HEK293T (cell line): ENCODE measurements at regions of chr7 and their contacts with region 1.

Region 1: DNA sequence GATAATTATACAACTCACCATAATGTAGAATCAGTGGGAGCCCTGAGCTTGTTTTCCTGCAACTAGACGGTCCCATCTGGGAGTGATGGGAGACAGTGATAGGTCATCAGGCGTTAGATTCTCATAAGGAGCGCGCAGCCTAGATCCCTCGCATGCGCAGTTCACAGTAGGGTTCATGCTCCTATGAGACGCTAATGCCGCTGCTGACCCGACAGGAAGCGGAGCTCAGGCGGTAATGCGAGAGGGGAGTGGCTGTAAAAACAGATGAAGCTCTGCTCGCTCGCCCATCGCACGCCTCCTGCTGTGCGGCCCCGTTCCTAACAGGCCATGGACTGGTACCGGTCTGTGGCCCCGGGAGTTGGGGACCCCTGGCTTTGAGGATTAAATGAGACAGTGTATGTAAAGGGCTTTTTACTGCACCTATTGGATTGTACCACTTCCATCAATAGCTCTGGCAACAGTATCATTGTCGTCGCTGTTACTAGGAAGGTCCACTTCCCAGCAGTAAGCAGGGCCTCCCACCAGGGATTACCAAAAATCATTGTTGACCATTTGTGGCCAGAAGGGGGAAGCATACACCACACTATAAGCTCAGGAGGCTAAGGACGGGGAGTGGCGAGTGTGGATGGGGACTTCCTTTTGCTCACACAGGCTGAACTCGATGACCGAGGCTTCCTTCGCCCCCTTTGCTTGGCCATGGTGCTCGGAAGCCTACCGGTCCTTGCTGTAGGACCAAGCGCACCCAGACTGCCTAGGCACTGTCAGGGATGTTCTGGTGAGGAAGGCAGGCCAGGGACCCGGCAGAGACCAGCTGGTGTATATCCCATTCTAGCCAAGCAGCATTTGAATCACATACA is 26.4 kb downstream of the AKR1B1 start:
- DNase-seq: peak; percentile 95

Region 2: GRCh38 chr7:134403677-134404076 is 28.8 kb before region 1 on chr7:
- CTCF ChIA-PET with region 1: no interaction called
- POLR2A ChIA-PET with region 1: no interaction called
- DNase-seq: no peak

Region 3: GRCh38 chr7:134505856-134506255 is 73.3 kb after region 1 on chr7:
- CTCF ChIA-PET with region 1: interaction called, 13 read pairs
- POLR2A ChIA-PET with region 1: no interaction called
- DNase-seq: no peak

Region 4: GRCh38 chr7:134547397-134548054 is 115.0 kb after region 1 on chr7:
- CTCF ChIA-PET with region 1: interaction called, 26 read pairs
- POLR2A ChIA-PET with region 1: interaction called, 12 read pairs
- DNase-seq: peak; percentile 88

Region 5: DNA sequence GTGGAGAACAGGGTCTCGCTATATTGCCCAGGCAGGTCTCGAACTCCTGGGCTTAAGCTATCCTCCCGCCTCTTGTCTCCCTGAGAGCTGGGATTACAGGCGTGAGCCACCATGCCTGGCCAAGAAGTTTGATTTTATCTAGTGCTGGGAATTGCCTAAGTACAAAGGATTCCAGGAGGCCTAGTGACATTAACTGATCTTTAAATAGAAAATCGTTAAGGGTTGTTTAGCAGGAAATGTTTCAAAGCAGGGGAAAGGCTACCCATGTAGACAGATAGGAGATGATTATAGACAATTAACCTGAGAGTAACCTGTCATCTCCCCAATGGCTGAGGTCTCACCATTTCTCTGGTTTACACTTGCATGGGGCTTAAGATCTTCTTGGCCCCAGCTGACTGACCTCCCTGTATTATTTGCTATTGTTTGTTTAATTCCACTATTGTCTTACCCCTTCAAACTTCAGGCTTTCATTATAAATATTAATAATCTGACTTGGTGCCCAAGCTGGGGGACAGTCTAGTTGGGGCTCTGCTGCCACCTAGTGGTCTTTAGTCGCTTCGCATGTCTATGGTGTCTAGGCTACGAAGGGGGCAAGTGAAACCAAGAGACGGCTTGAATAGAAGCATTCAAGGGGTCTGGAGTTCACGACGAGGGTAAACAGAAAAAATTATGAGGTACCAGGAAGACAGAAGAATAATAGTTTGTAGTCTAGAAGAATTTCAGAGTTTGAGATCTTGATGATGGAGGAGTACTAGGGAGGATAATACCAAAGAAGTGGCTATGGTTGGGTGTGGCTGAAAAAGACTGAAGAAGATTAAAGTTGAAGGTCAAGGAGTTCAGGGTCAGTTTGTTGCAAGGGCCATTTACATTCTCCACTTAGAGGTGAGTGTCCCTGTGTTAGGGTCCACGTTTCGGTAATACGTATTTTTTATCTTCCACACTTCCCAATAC is 173.7 kb after region 1 on chr7:
- CTCF ChIA-PET with region 1: interaction called, 22 read pairs
- POLR2A ChIA-PET with region 1: interaction called, 5 read pairs
- DNase-seq: peak; percentile 81

Region 6: GRCh38 chr7:134957005-134957404 is 524.5 kb after region 1 on chr7:
- CTCF ChIA-PET with region 1: interaction called, 13 read pairs
- POLR2A ChIA-PET with region 1: no interaction called
- DNase-seq: no peak